Activated T-helper 1 cell treated with anti-CD3 and anti-CD28 coated beads, Interleukin-12 subunit alpha, Interleukin-12 subunit beta, Interleukin-2, Interleukin-4 antibody, amounts not matched to agents 30 ng/mL and 10 ng/mL and 1 ng/mL, durations not matched to agents 14 hours and 24 hours and 36 hours (primary cell): ENCODE measurements at regions of chr7 and their contacts with region 1.

Region 1: GRCh38 chr7:158655931-158656441 is 48.6 kb downstream of the NCAPG2 start:
- DNase-seq: peak; percentile 68
- H3K4me3 Mint-ChIP-seq: peak overlapping the region; percentile 40
- H3K27ac Mint-ChIP-seq: peak overlapping the region; percentile 82
- H3K4me1 Mint-ChIP-seq: peaks cover 32% of the 10 kb centered on the region
- H3K27me3 Mint-ChIP-seq: no peaks in the 10 kb centered on the region

Region 2: GRCh38 chr7:158704704-158705468 is 48.9 kb after region 1 on chr7 and contains the start of gene NCAPG2:
- intact Hi-C with region 1: loop called (anchors 1 kb)
- DNase-seq: peak; percentile 94
- H3K4me3 Mint-ChIP-seq: peak within 1 kb of the TSS; percentile 87
- H3K27ac Mint-ChIP-seq: peak within 1 kb of the TSS; percentile 87
- H3K4me1 Mint-ChIP-seq: peaks cover 52% of the 10 kb centered on the region
- H3K27me3 Mint-ChIP-seq: peaks cover 2% of the 10 kb centered on the region
- total RNA-seq, gene NCAPG2: 76.5 and 86.9 TPM in 2 replicates

Region 3: DNA sequence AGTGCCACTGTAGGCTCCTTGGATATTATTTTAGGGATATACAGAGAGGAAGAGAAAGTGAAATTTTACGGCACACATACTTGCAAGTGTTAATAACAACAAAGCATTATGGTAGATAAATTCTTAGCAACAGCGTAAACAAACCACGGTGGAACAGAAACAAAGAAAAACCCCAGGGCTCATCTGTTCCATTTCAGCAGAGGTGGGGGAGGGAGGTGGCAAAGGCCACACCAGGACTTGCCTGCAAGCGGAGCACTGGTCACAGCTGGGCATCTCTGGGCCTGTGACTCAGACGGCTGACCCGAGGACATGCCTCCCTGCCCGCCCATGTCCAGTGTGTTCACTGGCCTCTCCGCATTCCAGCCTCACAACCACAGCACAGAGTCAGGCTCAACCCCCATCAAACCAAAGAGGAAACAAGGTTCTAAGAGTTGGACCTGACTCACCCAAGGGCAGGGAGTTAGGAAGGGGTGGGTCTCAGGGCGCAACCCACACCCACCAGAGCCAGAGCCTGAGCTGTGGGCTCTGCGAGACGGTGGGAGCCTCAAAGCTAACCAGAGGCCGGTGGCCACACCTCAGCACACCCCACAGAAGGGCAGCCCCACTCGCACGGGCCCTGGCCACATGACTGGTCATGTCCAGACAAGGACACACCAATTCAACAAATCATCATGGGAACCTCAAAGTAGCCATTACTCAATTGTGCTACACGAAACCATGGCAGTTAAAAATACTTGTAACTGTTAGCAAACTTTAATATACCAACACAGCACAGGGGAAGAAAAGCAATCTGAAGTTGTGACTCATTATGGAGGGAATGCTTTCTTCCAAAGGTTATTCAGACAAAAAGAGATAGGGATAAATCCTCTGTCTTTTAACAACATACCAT is 162.6 kb after region 1 on chr7:
- intact Hi-C with region 1: loop called (anchors 2 kb)
- DNase-seq: peak; percentile 78
- H3K4me3 Mint-ChIP-seq: peak overlapping the region; percentile 85
- H3K27ac Mint-ChIP-seq: peak overlapping the region; percentile 100
- H3K4me1 Mint-ChIP-seq: peaks cover 88% of the 10 kb centered on the region
- H3K27me3 Mint-ChIP-seq: no peaks in the 10 kb centered on the region

Region 4: GRCh38 chr7:158856883-158857668 is 201.1 kb after region 1 on chr7:
- intact Hi-C with region 1: loop called (anchors 5 kb)
- DNase-seq: no peak
- H3K4me3 Mint-ChIP-seq: peak overlapping the region; percentile 97
- H3K27ac Mint-ChIP-seq: no peak overlapping the region
- H3K4me1 Mint-ChIP-seq: peaks cover 37% of the 10 kb centered on the region
- H3K27me3 Mint-ChIP-seq: peaks cover 2% of the 10 kb centered on the region

Region 5: DNA sequence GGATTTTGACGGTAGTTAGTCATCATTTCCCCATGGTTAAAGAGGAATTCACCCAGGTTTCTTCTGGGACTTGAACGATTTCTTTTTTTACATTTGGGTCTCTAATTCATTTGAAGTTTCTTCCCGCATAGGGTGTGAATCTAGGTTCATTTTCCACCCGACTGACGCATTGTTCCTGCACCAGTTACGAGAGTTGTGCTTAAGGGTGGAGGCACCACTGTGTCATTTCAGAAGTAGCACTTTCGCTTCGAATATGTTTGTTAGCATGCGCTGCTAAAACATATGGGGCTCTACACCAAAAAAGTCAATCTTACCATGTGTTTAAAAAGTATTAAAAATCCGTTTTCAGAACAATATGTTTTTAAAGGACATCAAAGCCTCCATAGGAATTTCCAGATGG is 348.4 kb after region 1 on chr7:
- intact Hi-C with region 1: loop called (anchors 1 kb)
- DNase-seq: peak; percentile 14
- H3K4me3 Mint-ChIP-seq: peak overlapping the region; percentile 3
- H3K27ac Mint-ChIP-seq: peak overlapping the region; percentile 84
- H3K4me1 Mint-ChIP-seq: peaks cover 21% of the 10 kb centered on the region
- H3K27me3 Mint-ChIP-seq: peaks cover 5% of the 10 kb centered on the region